MCF 10A (cell line): ENCODE measurements at regions of chr17 and their contacts with region 1.

Region 1: DNA sequence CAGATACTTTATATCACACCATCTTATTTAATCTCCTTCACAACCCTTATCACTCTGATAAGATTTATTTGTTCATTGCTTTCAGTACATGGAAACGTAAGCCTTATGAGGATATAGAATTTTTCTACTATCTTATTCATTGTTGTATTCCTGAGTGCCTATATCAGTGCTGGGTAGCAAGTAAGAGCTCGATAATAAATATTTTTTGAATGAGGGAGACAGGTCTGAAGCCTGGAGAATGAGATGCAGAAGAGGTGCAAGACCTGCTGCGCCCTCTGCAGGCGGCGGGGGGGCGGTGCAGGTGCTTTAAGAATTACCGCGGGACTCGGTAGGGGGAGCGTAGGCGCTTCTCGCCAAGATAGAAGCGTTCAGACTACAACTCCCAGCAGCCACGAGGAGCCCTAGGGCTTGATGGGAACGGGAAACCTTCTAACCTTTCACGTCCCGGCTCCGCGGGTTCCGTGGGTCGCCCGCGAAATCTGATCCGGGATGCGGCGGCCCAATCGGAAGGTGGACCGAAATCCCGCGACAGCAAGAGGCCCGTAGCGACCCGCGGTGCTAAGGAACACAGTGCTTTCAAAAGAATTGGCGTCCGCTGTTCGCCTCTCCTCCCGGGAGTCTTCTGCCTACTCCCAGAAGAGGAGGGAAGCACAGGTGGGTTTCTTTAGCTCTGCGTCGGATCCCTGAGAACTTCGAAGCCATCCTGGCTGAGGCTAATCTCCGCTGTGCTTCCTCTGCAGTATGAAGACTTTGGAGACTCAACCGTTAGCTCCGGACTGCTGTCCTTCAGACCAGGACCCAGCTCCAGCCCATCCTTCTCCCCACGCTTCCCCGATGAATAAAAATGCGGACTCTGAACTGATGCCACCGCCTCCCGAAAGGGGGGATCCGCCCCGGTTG is at the start of gene WRAP53:
- DNase-seq: peak; percentile 100
- H3K4me3 Mint-ChIP-seq: peak within 1 kb of the TSS; percentile 97
- H3K27ac Mint-ChIP-seq: peak within 1 kb of the TSS; percentile 100
- H3K4me1 Mint-ChIP-seq: peaks cover 22% of the 10 kb centered on the region
- H3K27me3 Mint-ChIP-seq: no peaks in the 10 kb centered on the region
- CTCF ChIP-seq: peak; percentile 97
- total RNA-seq, gene WRAP53: 10.7 and 11.7 TPM in 2 replicates

Region 2: DNA sequence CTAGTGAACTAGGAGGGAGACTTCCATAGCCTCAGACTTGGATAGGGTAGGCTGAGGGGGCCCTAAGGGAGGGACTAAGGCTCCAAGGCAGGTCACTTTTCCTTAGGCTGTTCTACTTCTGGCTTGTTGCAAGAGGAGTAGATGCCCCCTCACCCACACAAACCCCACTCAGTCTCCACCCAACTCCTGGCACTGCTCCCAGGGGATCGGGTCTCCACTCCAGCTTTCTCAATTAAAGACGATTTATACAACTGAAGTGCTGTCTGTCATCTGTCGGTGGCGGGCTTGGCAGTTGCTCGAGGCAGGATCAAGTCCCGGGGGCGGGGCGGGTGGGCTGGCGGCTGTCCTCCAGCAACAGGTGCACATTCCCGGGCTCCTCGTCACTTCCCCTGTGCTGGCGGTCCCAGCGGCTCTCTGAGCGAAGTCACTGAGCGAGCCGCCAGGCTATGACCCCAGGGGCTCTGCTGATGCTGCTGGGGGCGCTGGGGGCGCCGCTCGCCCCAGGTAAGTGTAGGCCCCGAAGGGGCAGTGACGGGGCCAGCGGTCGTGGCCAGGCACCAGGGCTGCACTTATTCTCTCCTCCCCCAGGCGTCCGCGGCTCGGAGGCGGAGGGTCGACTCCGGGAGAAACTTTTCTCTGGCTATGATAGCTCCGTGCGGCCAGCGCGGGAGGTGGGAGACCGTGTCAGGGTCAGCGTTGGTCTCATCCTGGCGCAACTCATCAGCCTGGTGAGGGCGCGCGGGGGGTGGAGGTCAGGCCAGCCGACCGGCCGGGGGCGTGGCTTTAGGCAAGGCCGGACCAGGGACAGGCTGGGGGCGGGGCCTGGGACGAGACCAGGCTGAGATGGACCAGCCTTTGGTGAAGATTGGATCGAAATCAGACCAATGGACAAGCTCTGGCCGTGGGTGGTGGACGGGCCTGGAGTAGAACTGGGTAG is 243.2 kb before region 1 on chr17 and contains the start of gene CHRNB1:
- CTCF ChIA-PET with region 1: interaction called, 3 read pairs
- POLR2A ChIA-PET with region 1: interaction called, 16 read pairs
- intact Hi-C with region 1: no loop called
- DNase-seq: no peak
- H3K4me3 Mint-ChIP-seq: peak within 1 kb of the TSS; percentile 31
- H3K27ac Mint-ChIP-seq: peak within 1 kb of the TSS; percentile 90
- H3K4me1 Mint-ChIP-seq: peaks cover 11% of the 10 kb centered on the region
- H3K27me3 Mint-ChIP-seq: no peaks in the 10 kb centered on the region
- CTCF ChIP-seq: no peak
- total RNA-seq, gene CHRNB1: 3.3 and 7.8 TPM in 2 replicates

Region 3: DNA sequence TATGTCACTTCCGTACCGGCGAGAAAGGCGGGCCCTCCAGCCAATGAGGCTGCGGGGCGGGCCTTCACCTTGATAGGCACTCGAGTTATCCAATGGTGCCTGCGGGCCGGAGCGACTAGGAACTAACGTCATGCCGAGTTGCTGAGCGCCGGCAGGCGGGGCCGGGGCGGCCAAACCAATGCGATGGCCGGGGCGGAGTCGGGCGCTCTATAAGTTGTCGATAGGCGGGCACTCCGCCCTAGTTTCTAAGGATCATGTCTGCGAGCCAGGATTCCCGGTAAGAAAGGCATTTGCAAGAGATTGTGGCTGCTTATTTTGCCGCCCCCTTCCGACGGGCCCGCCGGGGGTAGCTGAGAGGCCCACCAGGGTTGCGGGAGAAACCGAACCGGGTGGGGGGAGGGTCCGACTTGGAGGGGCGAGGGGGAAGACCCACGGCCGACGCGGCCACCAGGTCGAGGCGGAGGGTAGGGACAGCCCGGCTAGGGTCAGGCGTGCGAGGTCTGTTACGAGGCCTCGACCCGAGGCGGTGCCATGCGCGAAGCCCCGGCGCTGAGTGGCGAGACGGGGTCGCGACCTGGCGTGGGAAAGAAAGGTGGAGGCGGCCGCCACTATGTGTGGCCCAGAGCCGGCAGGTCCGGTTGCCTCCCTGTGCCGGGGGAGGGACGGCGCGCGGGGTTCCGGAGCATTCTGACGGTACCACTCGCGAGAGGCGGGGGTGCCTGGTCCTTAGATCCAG is 115.4 kb before region 1 on chr17:
- CTCF ChIA-PET with region 1: interaction called, 7 read pairs
- POLR2A ChIA-PET with region 1: interaction called, 75 read pairs
- intact Hi-C with region 1: loop called (anchors 5 kb)
- DNase-seq: peak; percentile 99
- H3K4me3 Mint-ChIP-seq: peak overlapping the region; percentile 90
- H3K27ac Mint-ChIP-seq: peak overlapping the region; percentile 99
- H3K4me1 Mint-ChIP-seq: peaks cover 11% of the 10 kb centered on the region
- H3K27me3 Mint-ChIP-seq: no peaks in the 10 kb centered on the region
- CTCF ChIP-seq: no peak

Region 4: GRCh38 chr17:7627250-7628121 is 60.7 kb before region 1 on chr17 and contains the start of gene SAT2:
- CTCF ChIA-PET with region 1: interaction called, 48 read pairs
- POLR2A ChIA-PET with region 1: interaction called, 208 read pairs
- intact Hi-C with region 1: loop called (anchors 1 kb)
- DNase-seq: peak; percentile 95
- H3K4me3 Mint-ChIP-seq: peak within 1 kb of the TSS; percentile 84
- H3K27ac Mint-ChIP-seq: peak within 1 kb of the TSS; percentile 93
- H3K4me1 Mint-ChIP-seq: no peaks in the 10 kb centered on the region
- H3K27me3 Mint-ChIP-seq: no peaks in the 10 kb centered on the region
- CTCF ChIP-seq: no peak
- total RNA-seq, gene SAT2: 66.8 and 82.7 TPM in 2 replicates

Region 5: GRCh38 chr17:7834962-7835813 is 147.0 kb after region 1 on chr17:
- CTCF ChIA-PET with region 1: no interaction called
- POLR2A ChIA-PET with region 1: interaction called, 32 read pairs
- intact Hi-C with region 1: no loop called
- DNase-seq: peak; percentile 97
- H3K4me3 Mint-ChIP-seq: peak overlapping the region; percentile 89
- H3K27ac Mint-ChIP-seq: peak overlapping the region; percentile 99
- H3K4me1 Mint-ChIP-seq: peaks cover 43% of the 10 kb centered on the region
- H3K27me3 Mint-ChIP-seq: no peaks in the 10 kb centered on the region
- CTCF ChIP-seq: peak; percentile 73

Region 6: GRCh38 chr17:8118769-8119580 is 430.8 kb after region 1 on chr17:
- CTCF ChIA-PET with region 1: no interaction called
- POLR2A ChIA-PET with region 1: interaction called, 13 read pairs
- intact Hi-C with region 1: no loop called
- DNase-seq: peak; percentile 84
- H3K4me3 Mint-ChIP-seq: peak overlapping the region; percentile 77
- H3K27ac Mint-ChIP-seq: peak overlapping the region; percentile 98
- H3K4me1 Mint-ChIP-seq: peaks cover 32% of the 10 kb centered on the region
- H3K27me3 Mint-ChIP-seq: no peaks in the 10 kb centered on the region
- CTCF ChIP-seq: peak; percentile 87